HEK293 (cell line): ENCODE measurements at regions of chr12 and their contacts with region 1.

Region 1: DNA sequence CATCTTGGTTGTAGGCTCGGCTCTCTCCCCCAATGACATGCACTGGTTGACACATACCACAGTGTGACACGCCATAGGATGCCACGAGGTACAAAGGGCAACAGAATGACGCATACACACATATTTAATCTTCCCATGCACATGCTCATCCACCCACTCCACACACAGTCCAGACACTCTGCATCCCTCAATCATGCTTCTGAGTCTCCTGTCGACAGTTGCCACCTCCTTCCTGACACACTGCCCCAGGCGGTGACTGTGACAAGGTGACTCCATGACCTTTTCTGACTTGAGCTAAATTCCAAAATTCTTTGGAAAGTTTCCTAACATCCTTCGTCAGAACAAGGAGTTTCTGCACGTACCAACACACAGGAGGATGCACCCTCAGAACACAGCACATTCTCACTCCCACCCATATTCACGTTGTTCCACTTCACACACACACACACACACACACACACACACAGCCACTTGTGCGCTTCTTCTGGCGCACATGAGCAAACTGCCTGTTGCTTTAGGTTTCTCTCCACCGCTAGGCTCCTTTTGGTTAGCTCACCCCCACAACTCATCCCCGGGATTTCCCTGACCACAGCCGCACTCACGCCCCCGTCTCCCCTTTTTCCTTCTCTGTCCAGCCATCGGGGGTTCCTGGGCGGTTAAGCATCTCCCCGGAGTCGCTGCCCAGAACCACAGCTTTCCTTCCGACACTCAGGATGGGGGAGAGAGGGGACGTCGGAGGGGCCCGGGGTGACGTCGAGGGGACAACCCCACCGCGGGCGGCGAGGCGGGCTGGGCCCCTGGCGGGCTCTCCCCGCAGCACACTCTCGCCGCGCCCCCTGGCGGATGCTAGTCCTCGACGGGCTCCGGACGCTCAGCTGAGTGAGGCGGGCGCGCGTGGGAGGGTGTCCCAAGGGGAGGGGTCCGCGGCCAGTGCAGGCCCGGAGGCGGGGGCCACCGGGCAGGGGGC is 524 bp upstream of the WNT1 start:
- H3K4me3 ChIP-seq: no peak overlapping the region
- H3K27ac ChIP-seq: no peak overlapping the region
- H3K4me1 ChIP-seq: no peaks in the 10 kb centered on the region
- CTCF ChIP-seq: peak; percentile 81

Region 2: DNA sequence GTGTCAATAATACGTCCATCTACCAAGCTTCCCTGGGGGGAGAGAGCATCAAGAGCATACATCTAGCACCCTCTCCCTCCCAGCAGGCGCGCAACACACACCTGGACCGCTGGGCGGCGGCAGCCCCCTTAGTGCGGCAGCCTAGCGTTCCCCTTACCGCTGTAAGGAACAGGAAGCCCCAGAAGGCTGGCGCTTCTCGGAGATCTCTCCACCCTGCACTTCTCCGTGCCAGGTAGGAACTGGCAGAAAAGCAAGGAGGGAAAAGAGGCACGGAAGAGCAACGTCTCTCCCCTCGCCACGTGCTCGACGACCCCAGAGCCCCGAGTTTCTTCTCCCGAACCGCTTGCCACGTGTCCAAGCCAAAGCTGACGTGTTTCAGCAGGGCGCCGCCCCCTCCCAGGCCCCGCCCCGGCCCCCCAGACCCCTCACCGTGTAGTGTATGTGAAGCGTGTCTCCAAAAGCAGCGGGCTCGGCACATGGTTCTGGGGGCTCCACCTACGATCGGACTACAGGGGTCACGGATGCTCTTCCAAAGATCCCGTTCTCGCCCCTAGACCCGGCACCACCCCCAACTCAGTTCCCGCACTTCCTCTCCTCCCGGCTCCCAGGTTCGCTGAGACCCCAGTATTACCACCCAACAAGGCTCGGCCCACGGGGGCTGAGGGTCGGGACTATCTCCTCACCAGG is 52.8 kb before region 1 on chr12:
- CTCF ChIA-PET with region 1: interaction called, 10 read pairs
- POLR2A ChIA-PET with region 1: no interaction called
- H3K4me3 ChIP-seq: peak overlapping the region; percentile 38
- H3K27ac ChIP-seq: peak overlapping the region; percentile 49; the same call in 1 of the 2 replicates
- H3K4me1 ChIP-seq: no peaks in the 10 kb centered on the region
- CTCF ChIP-seq: no peak

Region 3: GRCh38 chr12:48936379-48936979 is 41.1 kb before region 1 on chr12:
- CTCF ChIA-PET with region 1: interaction called, 14 read pairs
- POLR2A ChIA-PET with region 1: no interaction called
- H3K4me3 ChIP-seq: no peak overlapping the region
- H3K27ac ChIP-seq: no peak overlapping the region
- H3K4me1 ChIP-seq: no peaks in the 10 kb centered on the region
- CTCF ChIP-seq: peak; percentile 67

Region 4: GRCh38 chr12:48957141-48958048 is 20.2 kb before region 1 on chr12 and contains the start of gene ARF3:
- CTCF ChIA-PET with region 1: interaction called, 62 read pairs
- POLR2A ChIA-PET with region 1: interaction called, 3 read pairs
- H3K4me3 ChIP-seq: peak within 1 kb of the TSS; percentile 81
- H3K27ac ChIP-seq: peak within 1 kb of the TSS; percentile 90
- H3K4me1 ChIP-seq: no peaks in the 10 kb centered on the region
- CTCF ChIP-seq: no peak; the same call in none of the 2 replicates

Region 5: DNA sequence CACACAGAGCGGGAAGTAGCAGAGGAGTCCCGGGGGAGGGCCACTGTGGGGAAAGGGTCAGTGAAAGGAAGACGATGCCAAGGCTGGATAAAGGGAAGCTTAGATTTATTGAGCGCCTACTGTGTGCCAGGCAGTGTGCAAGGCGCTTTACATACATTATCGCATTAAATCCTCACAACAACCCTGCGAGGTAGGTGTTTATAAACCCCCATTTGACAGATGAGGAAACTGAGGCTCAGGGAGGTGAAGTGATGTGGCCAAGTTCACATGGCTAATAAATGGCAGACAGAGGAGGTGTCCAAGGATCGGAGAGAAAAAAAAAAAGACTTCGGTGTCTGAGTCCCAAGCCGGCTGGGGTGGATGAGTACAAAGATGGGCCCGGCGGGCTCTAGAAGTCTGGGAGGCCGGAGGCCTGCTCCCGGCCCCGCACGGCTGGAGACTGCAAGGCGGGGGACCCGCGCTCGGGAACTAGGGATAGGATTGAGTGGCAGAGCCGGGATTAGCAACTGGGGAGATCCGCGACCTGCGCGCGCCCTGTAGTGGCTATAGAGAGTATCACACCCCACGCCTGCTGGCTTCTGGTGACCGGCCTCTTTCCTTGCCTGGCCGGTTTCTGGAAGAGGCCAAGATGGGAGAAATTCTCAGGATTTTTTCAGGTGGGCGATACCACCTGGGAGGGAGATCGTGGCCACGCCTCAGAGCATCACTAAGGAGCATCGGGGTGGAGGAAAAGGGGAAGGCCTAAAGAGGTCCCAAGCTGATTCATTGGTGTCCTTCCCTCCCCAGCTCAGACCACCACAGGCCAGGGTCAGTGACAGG is 17.7 kb after region 1 on chr12:
- CTCF ChIA-PET with region 1: interaction called, 37 read pairs
- POLR2A ChIA-PET with region 1: no interaction called
- H3K4me3 ChIP-seq: no peak overlapping the region
- H3K27ac ChIP-seq: no peak overlapping the region
- H3K4me1 ChIP-seq: peaks cover 6% of the 10 kb centered on the region
- CTCF ChIP-seq: peak; percentile 68

Region 6: DNA sequence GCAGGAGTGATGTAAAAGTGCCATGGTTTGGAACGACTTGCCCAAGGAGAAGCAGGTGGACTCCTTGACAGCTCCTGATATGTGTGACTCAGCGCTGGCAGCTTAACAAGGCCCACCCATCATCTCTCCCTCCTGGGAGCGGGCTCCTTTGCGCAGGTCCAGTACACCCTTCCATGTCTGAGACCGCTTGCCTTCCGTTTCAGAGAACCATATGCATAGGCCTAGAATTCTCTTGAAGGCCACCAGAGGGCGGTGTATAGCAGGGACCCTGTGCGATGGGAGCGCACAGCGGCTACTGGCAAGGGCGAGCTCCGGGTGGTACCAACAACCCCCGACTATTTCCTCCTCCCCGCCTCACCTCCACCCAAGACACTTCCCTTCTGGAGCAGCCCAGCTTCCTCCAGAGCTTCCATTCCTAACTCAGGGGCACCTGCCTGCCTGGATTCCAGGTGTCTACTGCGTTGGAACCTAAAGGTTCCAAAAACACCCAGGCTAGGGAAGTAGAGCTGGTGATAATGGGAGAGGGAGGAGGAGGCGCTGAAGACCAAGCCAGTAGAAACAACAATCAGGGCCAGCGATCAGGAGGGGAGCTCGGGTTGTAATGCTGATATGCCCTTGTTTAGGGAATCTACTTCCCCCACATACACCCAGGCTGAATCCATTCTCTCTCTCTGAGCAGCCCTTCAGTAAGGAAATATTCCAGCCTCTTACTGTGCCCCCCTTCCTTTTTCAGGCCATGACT is 110.8 kb after region 1 on chr12:
- CTCF ChIA-PET with region 1: no interaction called
- POLR2A ChIA-PET with region 1: no interaction called
- H3K4me3 ChIP-seq: peak overlapping the region; percentile 25
- H3K27ac ChIP-seq: no peak overlapping the region
- H3K4me1 ChIP-seq: no peaks in the 10 kb centered on the region
- CTCF ChIP-seq: peak; percentile 97